ENCODE measurements at regions of chr20 and their contacts with region 1.

Region 1: GRCh38 chr20:39429716-39430115 is 467.6 kb downstream of the DHX35 start:
- DNase-seq: no peak
- ATAC-seq: peak in 3 of 4 donors; percentile 42 to 55 (median 54)
- H3K4me3 ChIP-seq: no peak overlapping the region
- H3K27ac ChIP-seq: no peak overlapping the region
- H3K4me1 ChIP-seq: no peaks in the 10 kb centered on the region
- H3K27me3 ChIP-seq: no peaks in the 10 kb centered on the region
- CTCF ChIP-seq: peak; percentile 43

Region 2: GRCh38 chr20:39112178-39112743 is 317.5 kb before region 1 on chr20:
- intact Hi-C with region 1: loop called (anchors 5 to 10 kb)
- DNase-seq: peak in 1 of 2 donors; percentile 30
- ATAC-seq: peak; percentile 76 to 93 (median 92)
- H3K4me3 ChIP-seq: no peak overlapping the region
- H3K27ac ChIP-seq: no peak overlapping the region
- H3K4me1 ChIP-seq: no peaks in the 10 kb centered on the region
- H3K27me3 ChIP-seq: peaks cover 0 to 19% (median 3%) of the 10 kb centered on the region in 3 donors
- CTCF ChIP-seq: peak; percentile 72

Region 3: DNA sequence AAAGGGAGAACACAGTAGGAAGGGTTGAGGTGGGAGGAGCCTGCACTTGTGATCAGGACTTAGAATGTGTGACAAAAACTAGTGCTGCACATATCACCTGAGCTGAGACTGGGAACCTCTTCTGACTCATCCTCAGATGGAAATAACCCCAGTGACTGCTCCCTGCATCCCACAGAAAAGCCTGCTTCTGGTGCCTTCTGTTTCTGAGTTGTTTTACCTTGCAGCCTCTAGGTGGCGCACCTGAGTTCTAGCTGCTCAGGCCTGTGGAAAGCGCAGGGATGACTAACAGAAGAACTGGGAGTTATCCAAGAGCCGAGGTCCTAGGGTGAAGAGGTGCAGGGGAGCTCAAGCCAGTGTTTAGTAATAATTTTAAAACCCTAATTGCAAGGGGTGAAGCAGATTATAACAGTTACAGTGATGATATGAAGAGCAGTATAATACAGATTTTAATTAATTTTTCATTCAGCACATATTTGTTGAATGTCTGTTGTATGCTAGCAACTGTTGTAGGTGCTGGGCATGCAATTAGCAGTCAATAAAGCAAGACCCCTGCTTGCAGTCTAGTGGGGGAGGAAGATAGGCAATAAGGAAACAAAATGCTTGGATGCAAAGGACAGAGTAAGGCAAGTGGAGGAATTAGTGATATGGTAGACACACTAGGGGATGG is 165.1 kb before region 1 on chr20:
- intact Hi-C with region 1: loop called in 1 of 2 experiments (anchors 5 kb)
- DNase-seq: peak; percentile 65 to 74
- ATAC-seq: peak; percentile 72 to 90 (median 88)
- H3K4me3 ChIP-seq: no peak overlapping the region
- H3K27ac ChIP-seq: no peak overlapping the region
- H3K4me1 ChIP-seq: no peaks in the 10 kb centered on the region
- H3K27me3 ChIP-seq: no peaks in the 10 kb centered on the region
- CTCF ChIP-seq: peak; percentile 79

Region 4: DNA sequence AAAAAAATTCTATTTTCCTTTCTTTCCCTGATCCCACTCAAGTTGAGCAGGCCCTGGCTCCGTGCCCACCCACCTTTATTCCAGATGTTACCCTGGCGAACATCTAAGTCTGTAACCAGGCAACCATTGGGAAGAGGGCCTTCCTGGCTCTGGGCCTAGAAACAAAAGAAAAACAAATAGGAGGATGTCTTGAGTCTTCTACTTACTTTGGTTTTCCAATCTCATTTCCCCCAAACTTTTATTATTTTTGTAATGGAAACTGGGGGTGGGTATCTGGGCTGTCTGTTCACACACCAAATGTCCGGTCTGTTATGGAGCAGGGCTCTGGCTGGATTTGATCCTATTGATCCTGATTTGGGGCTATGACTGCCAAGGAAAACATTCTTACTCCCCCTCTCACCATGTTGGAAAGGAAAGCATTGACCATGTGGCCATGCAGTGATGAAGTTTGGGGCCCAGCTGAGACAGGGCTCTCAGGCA is 276.5 kb after region 1 on chr20:
- intact Hi-C with region 1: no loop called
- DNase-seq: peak in 1 of 2 donors; percentile 17
- ATAC-seq: no peak
- H3K4me3 ChIP-seq: no peak overlapping the region
- H3K27ac ChIP-seq: no peak overlapping the region
- H3K4me1 ChIP-seq: no peaks in the 10 kb centered on the region
- H3K27me3 ChIP-seq: no peaks in the 10 kb centered on the region
- CTCF ChIP-seq: no peak

Measured in psoas muscle (tissue), 8 donors.